HAP-1 (cell line): ENCODE measurements at regions of chr15 and their contacts with region 1.

Region 1: DNA sequence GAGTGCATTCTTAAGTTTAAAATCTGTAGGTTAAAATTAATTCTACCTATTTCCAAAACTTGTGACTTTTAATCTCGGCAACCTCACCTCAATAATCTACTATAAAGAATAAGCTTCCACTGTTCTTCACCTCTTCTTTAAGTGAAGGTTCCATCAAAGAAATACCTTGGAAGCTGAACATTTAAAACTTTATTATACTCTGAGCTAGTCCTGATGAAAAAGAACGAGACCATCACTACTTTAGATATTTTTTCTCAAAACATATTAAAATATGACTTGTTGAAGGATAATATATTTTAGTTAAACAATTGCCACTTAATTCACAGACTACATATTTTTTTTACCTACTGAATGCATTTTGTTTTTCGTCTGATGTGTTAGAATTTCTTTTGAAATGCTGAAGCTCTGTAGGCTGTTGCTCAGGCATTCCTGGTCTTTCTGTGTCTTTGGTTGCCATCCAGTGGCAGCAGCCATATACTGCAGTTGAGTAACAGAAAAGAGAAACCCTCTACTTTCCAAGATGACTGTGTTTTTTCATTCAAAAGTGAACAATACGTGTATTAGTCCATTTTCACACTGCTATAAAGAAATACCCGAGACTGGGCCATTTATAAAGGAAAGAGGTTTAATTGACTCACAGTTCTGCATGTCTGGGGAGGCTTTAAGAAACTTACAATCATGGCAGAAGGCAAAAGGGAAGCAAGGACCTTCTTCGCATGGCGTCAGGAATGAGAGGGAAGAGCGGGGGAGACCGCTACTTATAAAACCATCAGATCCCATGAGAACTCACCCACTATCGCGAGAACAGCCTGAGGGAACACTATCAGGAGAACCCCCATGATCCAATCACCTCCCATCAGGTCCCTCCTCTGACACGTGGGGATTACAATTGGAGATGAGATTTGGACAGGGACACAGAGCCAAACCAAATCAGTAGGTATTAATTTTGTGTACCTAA is 4.5 kb upstream of the GOLGA8B start:
- DNase-seq: peak; percentile 69 to 78
- H3K4me3 ChIP-seq: peak overlapping the region; percentile 21
- H3K4me1 ChIP-seq: peaks cover 19% of the 10 kb centered on the region
- H3K27me3 ChIP-seq: no peaks in the 10 kb centered on the region

Region 2: DNA sequence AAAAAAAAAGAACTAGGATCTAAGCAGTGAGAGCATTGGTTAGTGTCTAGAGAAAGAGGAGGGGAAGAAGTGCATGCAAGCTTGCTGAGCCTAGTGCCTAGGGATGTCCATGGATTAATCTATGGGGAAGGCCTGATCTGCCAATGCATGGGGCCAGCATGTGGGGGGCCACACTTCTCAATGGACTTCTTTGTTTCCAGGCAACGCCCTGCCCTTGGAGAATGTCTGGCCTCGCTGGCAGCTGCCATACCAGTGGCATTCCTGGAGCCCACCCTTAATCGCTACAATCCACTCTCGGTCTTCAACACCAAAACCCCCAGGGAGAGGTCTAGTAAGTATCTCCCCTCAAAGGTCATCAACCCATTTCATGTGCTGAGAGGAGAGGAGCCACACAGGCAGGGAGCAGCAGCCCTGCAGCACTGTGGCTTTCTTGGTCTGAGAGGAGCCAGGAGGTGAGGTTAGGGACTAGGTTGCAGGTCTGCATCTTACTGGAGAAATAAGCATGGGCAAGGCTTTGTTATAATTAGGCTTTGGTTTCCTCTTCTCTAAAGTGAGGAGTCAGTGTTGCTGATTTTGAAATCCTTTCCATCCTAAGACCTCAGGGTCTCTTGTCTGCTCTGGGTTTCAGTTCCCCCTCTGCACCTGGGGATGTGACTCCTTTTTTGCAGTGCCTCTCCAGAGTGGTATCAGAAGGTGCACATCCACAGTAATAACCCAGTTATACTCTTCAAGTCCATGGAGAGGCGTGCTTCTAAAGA is 807.8 kb before region 1 on chr15:
- in situ Hi-C with region 1: no loop called
- DNase-seq: no peak
- H3K4me3 ChIP-seq: no peak overlapping the region
- H3K4me1 ChIP-seq: no peaks in the 10 kb centered on the region
- H3K27me3 ChIP-seq: peaks cover 4% of the 10 kb centered on the region; the same call in 1 of the 2 replicates

Region 3: GRCh38 chr15:34055853-34056595 is 532.0 kb before region 1 on chr15:
- in situ Hi-C with region 1: loop called (anchors 25 kb)
- DNase-seq: no peak
- H3K4me3 ChIP-seq: no peak overlapping the region
- H3K4me1 ChIP-seq: no peaks in the 10 kb centered on the region
- H3K27me3 ChIP-seq: no peaks in the 10 kb centered on the region